Pancreas (tissue), 10 donors: ENCODE measurements at regions of chr17 and their contacts with region 1.

Region 1: DNA sequence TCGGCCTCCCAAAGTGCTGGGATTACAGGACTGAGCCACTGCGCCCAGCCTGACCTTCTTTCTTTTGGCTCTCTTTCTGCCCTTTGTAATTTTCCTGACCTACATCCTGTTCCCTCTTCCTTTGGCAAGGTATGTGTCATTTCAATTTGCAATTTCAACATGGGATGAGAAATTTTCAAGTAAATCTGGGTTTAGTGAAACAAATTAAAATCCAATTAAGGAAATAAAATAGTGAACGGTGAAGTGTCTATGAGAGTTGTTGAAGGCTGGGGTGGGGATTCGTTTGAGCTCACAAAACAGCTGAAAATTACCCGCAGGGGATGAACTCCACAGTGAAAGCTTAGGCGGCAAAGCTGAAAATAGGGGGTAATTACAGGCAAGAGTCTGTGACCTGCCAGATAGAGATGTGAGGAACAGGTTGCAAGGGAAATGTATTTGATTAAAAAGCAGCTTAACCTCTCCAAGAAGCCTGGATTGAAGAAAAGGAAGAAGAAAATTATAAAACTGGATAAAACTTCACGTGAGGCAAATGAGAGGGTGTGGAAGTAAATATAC is 277.7 kb downstream of the UTP18 start:
- DNase-seq: no peak
- ATAC-seq: no peak
- H3K4me3 ChIP-seq: no peak overlapping the region
- H3K27ac ChIP-seq: no peak overlapping the region
- H3K4me1 ChIP-seq: no peaks in the 10 kb centered on the region
- H3K27me3 ChIP-seq: no peaks in the 10 kb centered on the region
- CTCF ChIP-seq: no peak

Region 2: DNA sequence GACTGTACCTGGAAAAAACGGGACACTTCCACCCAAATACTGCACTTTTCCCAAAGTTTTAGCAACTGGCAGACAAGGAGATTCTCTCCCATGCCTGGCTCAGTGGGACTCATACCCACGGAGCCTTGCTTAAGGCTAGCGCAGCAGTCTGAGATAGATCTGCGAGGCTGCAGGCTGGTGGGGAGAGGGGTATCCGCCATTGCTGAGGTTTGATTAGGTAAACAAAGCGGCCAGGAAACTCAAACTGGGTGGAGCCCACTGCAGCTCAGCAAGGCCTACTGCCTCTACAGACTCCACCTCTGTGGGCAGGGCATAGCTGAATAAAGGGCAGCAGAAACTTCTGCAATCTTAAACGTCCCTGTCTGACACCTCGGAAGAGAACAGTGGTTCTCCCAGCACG is 232.9 kb before region 1 on chr17:
- intact Hi-C with region 1: loop called in 1 of 3 experiments (anchors 10 kb)
- DNase-seq: no peak
- ATAC-seq: no peak
- H3K4me3 ChIP-seq: no peak overlapping the region
- H3K27ac ChIP-seq: no peak overlapping the region
- H3K4me1 ChIP-seq: no peaks in the 10 kb centered on the region
- H3K27me3 ChIP-seq: no peaks in the 10 kb centered on the region
- CTCF ChIP-seq: no peak

Region 3: DNA sequence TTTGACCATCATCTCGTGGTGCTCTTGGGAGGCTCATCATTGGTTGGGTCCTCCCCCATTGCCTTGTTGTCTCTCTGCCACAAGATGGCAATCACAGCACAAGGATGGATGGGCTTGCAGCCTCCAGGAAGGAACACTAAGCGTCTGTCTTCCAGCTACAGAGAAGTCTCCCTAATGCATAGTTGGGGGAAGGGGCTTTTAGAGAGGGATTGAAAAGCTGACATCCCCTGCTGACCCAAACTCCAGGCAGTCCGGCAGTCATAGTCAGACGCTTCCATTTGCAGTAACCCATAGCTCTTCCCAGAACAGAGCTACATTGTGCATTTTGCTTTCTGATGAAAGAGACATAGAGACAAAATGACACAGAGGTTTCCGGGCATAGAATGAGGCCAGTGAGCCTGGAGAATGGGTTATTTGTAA is 166.3 kb before region 1 on chr17:
- intact Hi-C with region 1: loop called in 2 of 3 experiments (anchors 5 to 10 kb)
- DNase-seq: peak in 2 of 6 donors; percentile 34 to 35
- ATAC-seq: peak; percentile 63 to 94 (median 91)
- H3K4me3 ChIP-seq: no peak overlapping the region
- H3K27ac ChIP-seq: no peak overlapping the region
- H3K4me1 ChIP-seq: no peaks in the 10 kb centered on the region
- H3K27me3 ChIP-seq: no peaks in the 10 kb centered on the region
- CTCF ChIP-seq: peak; percentile 14 to 40 (median 22)

Region 4: GRCh38 chr17:51685287-51685909 is 147.3 kb after region 1 on chr17:
- intact Hi-C with region 1: no loop called
- DNase-seq: no peak
- ATAC-seq: no peak
- H3K4me3 ChIP-seq: no peak overlapping the region
- H3K27ac ChIP-seq: no peak overlapping the region
- H3K4me1 ChIP-seq: no peaks in the 10 kb centered on the region
- H3K27me3 ChIP-seq: no peaks in the 10 kb centered on the region
- CTCF ChIP-seq: no peak